ENCODE measurements at regions of chr1 and their contacts with region 1.

Region 1: GRCh38 chr1:116556289-116557006 is 14.4 kb downstream of the CD58 start:
- DNase-seq: peak; percentile 84
- ATAC-seq: peak; percentile 95
- H3K4me3 Mint-ChIP-seq: peak overlapping the region; percentile 40
- H3K27ac Mint-ChIP-seq: peak overlapping the region; percentile 92
- H3K4me1 Mint-ChIP-seq: peaks cover 68% of the 10 kb centered on the region
- H3K27me3 Mint-ChIP-seq: no peaks in the 10 kb centered on the region
- CTCF ChIP-seq: no peak

Region 2: DNA sequence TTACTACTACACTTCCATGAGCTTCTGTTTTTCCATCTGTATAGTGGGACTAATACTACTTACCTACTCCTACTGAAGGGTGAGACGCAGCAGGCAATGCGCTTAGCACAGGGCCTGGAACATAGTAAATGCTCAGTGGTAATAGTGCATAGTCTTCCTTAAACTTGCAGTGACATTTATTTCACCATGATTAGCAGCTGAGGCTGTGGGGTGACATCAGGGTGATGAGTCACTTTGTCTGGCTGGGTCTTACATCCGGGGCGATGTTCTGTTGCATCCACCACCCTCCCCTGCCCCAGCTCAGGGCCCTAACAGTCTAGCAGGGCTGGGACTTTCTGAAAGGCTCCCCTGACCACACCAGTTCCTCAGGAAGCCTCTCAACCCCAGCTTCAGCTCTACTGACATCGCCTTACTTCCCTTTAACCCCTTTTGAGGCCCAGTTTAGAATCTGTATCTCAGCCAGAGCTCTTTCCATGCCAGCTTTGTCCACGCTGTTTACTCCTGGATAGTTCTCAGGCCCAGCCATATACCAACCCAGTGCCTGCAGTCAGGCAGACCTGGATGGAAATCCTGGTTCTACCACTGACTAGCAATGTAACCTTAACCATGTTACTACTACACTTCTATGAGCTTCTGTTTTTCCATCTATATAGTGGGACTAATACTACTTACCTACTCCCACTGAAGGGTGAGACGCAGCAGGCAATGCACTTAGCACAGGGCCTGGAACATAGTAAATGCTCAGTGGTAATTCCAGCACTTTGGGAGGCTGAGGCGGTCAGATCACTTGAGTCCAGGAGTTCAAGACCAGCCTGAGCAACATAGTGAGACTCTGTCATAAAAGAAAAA is 51.9 kb before region 1 on chr1:
- CTCF ChIA-PET with region 1: interaction called, 4 read pairs
- POLR2A ChIA-PET with region 1: interaction called, 4 read pairs
- intact Hi-C with region 1: loop called (anchors 5 kb)
- DNase-seq: peak; percentile 96
- ATAC-seq: peak; percentile 90
- H3K4me3 Mint-ChIP-seq: peak overlapping the region; percentile 13
- H3K27ac Mint-ChIP-seq: peak overlapping the region; percentile 95
- H3K4me1 Mint-ChIP-seq: peaks cover 62% of the 10 kb centered on the region
- H3K27me3 Mint-ChIP-seq: no peaks in the 10 kb centered on the region
- CTCF ChIP-seq: no peak

Measured in activated CD8-positive, alpha-beta T cell treated with anti-CD3 and anti-CD28 coated beads for 36 hours (primary cell).